Endothelial cell of umbilical vein (primary cell): ENCODE measurements at regions of chr17 and their contacts with region 1.

Region 1: GRCh38 chr17:17001874-17002520 is 30.1 kb upstream of the TNFRSF13B start:
- DNase-seq: peak; percentile 44
- H3K4me3 ChIP-seq: no peak overlapping the region
- H3K27ac ChIP-seq: no peak overlapping the region
- H3K4me1 ChIP-seq: peaks cover 3% of the 10 kb centered on the region
- H3K27me3 ChIP-seq: no peaks in the 10 kb centered on the region
- CTCF ChIP-seq: peak; percentile 92 to 93
- POLR2A ChIP-seq: no peak

Region 2: DNA sequence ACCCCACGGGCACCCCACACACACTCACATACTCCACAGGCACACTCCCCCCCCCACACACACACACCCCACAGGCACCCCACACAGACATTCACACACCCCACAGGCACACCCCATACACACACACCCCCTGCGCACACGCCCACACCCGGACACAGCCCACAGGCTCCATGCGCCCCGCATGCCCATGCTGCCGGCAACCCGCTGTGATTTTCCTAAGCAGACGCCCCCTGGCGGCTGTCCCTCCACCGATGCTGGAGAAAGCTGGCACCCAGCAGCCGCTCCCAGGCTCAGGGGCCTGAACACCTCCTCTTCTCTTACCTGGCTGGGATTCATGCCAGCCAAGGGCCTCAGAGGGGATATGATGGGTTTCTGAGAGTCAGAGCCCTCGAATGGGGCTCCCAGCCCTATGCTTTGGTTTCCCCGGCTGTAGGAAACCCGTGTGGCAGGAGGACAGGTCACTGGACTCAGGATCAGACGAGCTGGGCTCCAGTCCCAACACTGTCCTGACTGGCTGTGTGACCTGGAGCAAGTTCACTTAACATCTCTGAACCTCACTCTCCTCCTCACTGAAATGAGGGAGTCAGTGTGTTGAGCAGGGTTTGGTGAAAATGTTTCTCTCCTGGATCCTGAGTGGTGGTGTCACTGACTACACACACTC is 10.5 kb before region 1 on chr17:
- CTCF ChIA-PET with region 1: interaction called, 15 read pairs
- POLR2A ChIA-PET with region 1: no interaction called
- dilution Hi-C with region 1: no loop called
- intact Hi-C with region 1: no loop called
- DNase-seq: peak; percentile 33
- H3K4me3 ChIP-seq: no peak overlapping the region
- H3K27ac ChIP-seq: no peak overlapping the region
- H3K4me1 ChIP-seq: no peaks in the 10 kb centered on the region
- H3K27me3 ChIP-seq: peaks cover 3 to 12% of the 10 kb centered on the region in 2 experiments
- CTCF ChIP-seq: peak; percentile 84 to 91
- POLR2A ChIP-seq: no peak

Region 3: DNA sequence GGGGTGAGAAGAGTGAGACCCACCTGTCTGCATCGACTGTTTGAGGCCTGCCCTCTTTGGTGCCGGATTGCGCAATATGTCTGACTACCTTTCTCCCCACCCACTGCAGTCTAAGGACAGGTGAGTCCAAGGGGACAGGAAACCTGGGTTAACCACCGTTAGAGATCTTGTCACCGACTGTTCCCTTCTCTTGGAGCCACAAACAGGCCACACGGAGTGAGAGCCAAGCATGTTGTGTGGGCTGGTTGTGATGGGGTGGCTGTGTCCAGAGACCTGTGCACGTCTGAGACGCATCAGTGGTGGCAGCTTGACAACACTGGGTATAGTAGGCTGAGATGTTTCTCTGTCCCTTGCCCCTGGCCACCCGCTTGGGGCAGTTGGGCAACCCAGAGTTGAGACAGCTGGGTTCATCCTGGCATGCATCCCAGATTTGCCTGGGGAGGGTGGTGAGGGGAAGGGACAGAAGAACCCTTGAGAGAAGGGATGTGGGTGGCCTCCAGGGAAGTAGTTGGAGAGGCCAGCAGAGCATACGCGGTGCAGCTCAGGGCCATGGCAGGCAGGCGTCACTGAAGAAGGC is 61.6 kb after region 1 on chr17:
- CTCF ChIA-PET with region 1: no interaction called
- POLR2A ChIA-PET with region 1: no interaction called
- dilution Hi-C with region 1: no loop called
- intact Hi-C with region 1: loop called (anchors 10 kb)
- DNase-seq: no peak
- H3K4me3 ChIP-seq: no peak overlapping the region
- H3K27ac ChIP-seq: no peak overlapping the region
- H3K4me1 ChIP-seq: no peaks in the 10 kb centered on the region
- H3K27me3 ChIP-seq: no peaks in the 10 kb centered on the region
- CTCF ChIP-seq: no peak
- POLR2A ChIP-seq: no peak

Region 4: GRCh38 chr17:17191346-17191792 is 189.4 kb after region 1 on chr17:
- CTCF ChIA-PET with region 1: no interaction called
- POLR2A ChIA-PET with region 1: no interaction called
- dilution Hi-C with region 1: no loop called
- intact Hi-C with region 1: loop called (anchors 5 kb)
- DNase-seq: peak; percentile 93
- H3K4me3 ChIP-seq: no peak overlapping the region
- H3K27ac ChIP-seq: peak overlapping the region; percentile 79
- H3K4me1 ChIP-seq: peaks cover 21% of the 10 kb centered on the region
- H3K27me3 ChIP-seq: no peaks in the 10 kb centered on the region
- CTCF ChIP-seq: no peak
- POLR2A ChIP-seq: peak; percentile 34

Region 5: DNA sequence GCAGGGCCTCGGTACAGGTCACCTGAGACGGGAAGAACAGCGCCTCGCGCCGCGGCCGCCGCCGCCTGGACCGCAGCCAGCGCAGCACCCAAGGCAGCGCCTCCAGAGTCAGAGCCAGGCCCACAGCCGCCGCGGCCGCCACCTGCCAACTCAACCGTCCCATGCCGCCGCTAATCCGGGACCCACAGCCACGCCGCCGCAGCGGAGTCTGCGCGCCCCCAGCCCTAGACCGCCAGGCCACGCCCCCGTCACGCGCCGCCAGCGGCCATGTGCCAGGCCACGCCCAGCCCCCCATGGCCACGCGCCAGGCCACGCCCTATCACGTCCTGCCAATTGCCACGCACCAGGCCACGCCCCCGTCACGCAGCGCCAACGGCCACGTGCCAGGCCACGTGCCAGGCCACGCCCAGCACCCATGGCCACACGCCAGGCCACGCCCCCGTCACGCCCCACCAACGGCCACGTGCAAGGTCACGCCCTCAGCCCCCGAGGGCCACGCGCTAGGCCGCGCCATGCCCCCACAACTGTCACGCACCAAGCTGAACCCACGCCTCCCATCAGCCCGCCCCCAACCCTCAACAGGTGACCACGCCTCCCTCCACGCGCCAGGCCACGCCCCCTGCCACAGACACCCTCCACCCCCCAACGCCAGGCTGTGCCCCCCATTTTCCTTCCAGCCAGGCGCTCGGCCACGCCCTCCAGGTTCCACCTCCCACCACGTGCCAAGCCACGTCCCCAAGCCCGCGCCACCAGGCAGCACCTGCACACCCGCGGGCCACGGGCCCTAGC is 204.3 kb after region 1 on chr17 and contains the start of gene PLD6:
- CTCF ChIA-PET with region 1: interaction called, 3 read pairs
- POLR2A ChIA-PET with region 1: no interaction called
- dilution Hi-C with region 1: no loop called
- intact Hi-C with region 1: loop called (anchors 5 kb)
- DNase-seq: peak; percentile 68
- H3K4me3 ChIP-seq: peak within 1 kb of the TSS; percentile 36 to 53 (median 48)
- H3K27ac ChIP-seq: no peak within 1 kb of the TSS
- H3K4me1 ChIP-seq: peaks cover 13% of the 10 kb centered on the region
- H3K27me3 ChIP-seq: no peaks in the 10 kb centered on the region
- CTCF ChIP-seq: no peak
- POLR2A ChIP-seq: peak; percentile 45
- total RNA-seq, gene PLD6: 2.7 and 4.4 TPM in 2 replicates

Region 6: GRCh38 chr17:17237026-17237799 is 235.2 kb after region 1 on chr17 and contains the start of gene FLCN:
- CTCF ChIA-PET with region 1: no interaction called
- POLR2A ChIA-PET with region 1: no interaction called
- dilution Hi-C with region 1: no loop called
- intact Hi-C with region 1: loop called (anchors 10 kb)
- DNase-seq: peak; percentile 90
- H3K4me3 ChIP-seq: peak within 1 kb of the TSS; percentile 69 to 91 (median 71)
- H3K27ac ChIP-seq: peak within 1 kb of the TSS; percentile 98
- H3K4me1 ChIP-seq: peaks cover 10% of the 10 kb centered on the region
- H3K27me3 ChIP-seq: no peaks in the 10 kb centered on the region
- CTCF ChIP-seq: no peak
- POLR2A ChIP-seq: peak; percentile 83
- total RNA-seq, gene FLCN: 56.9 and 68.9 TPM in 2 replicates

Region 7: DNA sequence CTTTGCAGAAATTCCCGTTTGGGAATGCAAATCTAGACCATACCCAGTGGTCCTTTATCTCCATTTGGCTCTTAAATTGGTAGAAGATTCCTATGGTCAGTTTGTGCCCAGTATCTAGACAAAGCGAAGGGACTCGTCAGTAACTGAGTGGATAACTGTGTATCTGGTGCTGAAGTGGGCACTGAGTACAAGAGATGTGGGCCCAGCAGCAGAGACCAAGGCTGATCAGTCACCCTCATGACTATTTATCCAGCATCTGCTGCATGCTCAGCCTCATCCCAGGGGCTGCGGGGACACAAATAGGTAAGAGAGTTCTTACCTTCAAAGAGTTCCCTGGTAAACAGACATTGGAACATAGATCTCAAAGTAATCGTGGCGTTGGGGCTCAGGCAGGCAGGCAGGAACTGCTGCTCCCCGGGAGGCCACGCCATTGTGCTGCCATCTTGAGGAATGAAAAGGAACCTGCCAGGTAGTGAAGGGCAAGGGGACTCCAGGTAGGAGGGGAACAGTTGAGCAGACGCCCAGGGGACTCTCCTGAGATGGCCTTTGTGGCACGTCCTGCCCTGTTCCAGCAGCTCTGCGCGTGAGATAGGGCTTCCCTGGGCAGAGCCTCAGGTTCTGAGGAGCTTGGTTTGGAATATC is 311.5 kb after region 1 on chr17:
- CTCF ChIA-PET with region 1: no interaction called
- POLR2A ChIA-PET with region 1: no interaction called
- dilution Hi-C with region 1: no loop called
- intact Hi-C with region 1: loop called (anchors 10 kb)
- DNase-seq: peak; percentile 16
- H3K4me3 ChIP-seq: no peak overlapping the region
- H3K27ac ChIP-seq: no peak overlapping the region
- H3K4me1 ChIP-seq: peaks cover 4% of the 10 kb centered on the region
- H3K27me3 ChIP-seq: no peaks in the 10 kb centered on the region
- CTCF ChIP-seq: peak; percentile 19 to 21
- POLR2A ChIP-seq: no peak